ENCODE measurements at regions of chr20 and their contacts with region 1.

Region 1: GRCh38 chr20:45857114-45857881 is at the starts of genes ACOT8 and ZSWIM3:
- DNase-seq: peak; percentile 99
- H3K4me3 Mint-ChIP-seq: peak within 1 kb of the TSS; percentile 98
- H3K27ac Mint-ChIP-seq: peak within 1 kb of the TSS; percentile 98
- H3K4me1 Mint-ChIP-seq: peaks cover 35% of the 10 kb centered on the region
- H3K27me3 Mint-ChIP-seq: no peaks in the 10 kb centered on the region
- total RNA-seq, gene ACOT8: 27.6 and 28.5 TPM in 2 replicates
- total RNA-seq, gene ZSWIM3: 5.5 and 6.0 TPM in 2 replicates

Region 2: DNA sequence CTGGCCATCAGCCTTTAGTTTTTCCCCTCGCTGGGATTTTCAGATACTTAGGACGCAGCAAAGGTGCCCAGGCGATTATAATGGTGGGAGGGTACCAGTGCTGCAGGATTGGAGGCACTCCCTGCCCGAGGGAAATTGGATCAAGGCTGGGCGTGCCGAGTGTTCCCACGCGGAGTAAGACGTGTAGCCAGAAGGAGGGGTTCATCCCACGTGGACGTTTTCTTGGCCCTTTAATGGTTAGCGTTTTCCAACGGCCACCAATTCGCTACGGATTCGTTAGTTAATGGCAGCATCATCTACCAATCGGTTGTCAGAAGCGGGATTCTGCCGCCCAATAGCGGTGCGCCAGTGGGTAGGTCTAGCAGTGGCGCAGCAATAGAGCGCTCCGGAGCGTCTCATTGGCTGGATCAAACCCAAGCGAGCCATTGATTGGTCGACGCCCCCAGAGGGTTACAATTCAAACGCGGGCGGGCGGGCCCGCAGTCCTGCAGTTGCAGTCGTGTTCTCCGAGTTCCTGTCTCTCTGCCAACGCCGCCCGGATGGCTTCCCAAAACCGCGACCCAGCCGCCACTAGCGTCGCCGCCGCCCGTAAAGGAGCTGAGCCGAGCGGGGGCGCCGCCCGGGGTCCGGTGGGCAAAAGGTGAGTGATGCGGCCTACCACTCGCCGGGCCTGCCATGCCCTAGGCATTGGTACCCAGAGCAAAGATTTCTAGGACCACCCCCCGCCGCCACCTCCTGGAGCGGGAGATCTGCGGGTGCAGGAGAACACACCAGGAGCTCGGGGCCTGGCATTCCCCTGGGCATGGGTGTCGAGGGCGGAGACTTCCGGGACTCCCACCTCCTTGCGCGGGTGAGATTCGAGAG is 44.9 kb before region 1 on chr20 and contains the start of gene UBE2C:
- intact Hi-C with region 1: loop called (anchors 1 kb)
- DNase-seq: peak; percentile 98
- H3K4me3 Mint-ChIP-seq: peak within 1 kb of the TSS; percentile 89
- H3K27ac Mint-ChIP-seq: peak within 1 kb of the TSS; percentile 90
- H3K4me1 Mint-ChIP-seq: peaks cover 27% of the 10 kb centered on the region
- H3K27me3 Mint-ChIP-seq: no peaks in the 10 kb centered on the region
- total RNA-seq, gene UBE2C: 113 and 115 TPM in 2 replicates

Region 3: DNA sequence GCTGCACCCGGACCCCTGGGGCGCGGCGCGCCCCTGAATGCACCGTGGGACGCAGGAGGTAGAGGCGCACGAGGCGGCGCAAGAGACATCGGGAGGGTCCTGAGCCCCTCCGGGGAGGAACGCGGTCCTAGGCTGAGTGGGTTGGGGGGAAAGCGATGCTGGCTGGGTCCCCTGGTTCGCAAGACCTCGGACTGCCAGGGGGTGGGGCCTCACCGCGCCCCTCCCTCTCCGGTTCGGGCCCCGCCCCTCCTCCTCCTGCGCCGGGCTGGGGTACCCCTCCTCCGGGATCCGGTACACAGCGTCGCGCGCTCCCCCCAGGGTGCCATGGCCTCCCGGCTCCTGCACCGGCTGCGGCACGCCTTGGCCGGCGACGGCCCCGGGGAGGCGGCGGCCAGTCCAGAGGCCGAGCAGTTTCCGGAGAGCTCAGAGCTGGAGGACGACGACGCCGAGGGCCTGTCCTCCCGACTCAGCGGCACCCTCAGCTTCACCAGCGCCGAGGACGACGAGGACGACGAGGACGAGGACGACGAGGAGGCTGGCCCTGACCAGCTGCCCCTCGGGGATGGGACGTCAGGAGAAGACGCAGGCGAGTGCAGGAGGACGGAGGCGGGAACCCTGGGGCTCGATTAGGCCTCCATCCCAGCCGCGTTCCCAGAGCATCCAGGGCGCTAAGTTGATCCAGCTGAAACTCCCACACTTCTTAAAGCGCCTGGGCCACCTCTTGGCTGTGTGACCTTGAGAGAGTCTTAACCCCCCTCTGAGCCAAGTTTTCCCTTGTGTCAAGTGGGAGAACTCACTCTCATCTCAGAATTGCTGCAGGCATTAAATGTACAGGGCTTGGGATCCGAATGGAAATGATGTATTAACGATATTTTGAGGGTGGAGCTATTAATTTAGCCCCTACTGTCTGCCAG is 23.2 kb before region 1 on chr20:
- intact Hi-C with region 1: loop called (anchors 2 kb)
- DNase-seq: peak; percentile 87
- H3K4me3 Mint-ChIP-seq: peak overlapping the region; percentile 83
- H3K27ac Mint-ChIP-seq: no peak overlapping the region
- H3K4me1 Mint-ChIP-seq: peaks cover 6% of the 10 kb centered on the region
- H3K27me3 Mint-ChIP-seq: peaks cover 10% of the 10 kb centered on the region

Region 4: DNA sequence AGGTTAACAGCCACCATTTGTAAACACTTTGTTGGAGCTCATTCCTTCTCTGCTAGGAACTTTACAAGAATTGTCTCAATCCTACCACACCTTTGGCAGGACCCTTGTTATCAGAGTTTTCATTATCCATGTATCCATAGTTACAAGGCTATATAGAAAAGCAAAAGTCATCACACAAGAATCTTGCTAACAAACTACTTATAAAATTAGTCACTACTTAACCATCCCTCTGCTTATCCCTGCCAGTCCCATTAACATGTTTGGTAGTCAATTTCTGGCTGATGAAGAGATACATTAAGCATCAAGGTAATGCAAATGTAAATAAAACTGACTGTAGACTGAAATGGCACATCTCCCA is 10.5 kb after region 1 on chr20:
- intact Hi-C with region 1: no loop called
- DNase-seq: no peak
- H3K4me3 Mint-ChIP-seq: no peak overlapping the region
- H3K27ac Mint-ChIP-seq: no peak overlapping the region
- H3K4me1 Mint-ChIP-seq: no peaks in the 10 kb centered on the region
- H3K27me3 Mint-ChIP-seq: no peaks in the 10 kb centered on the region

Region 5: GRCh38 chr20:45880988-45881788 is 23.9 kb after region 1 on chr20 and contains the start of gene ZSWIM1:
- intact Hi-C with region 1: loop called (anchors 1 kb)
- DNase-seq: peak; percentile 100
- H3K4me3 Mint-ChIP-seq: peak within 1 kb of the TSS; percentile 92
- H3K27ac Mint-ChIP-seq: peak within 1 kb of the TSS; percentile 82
- H3K4me1 Mint-ChIP-seq: peaks cover 33% of the 10 kb centered on the region
- H3K27me3 Mint-ChIP-seq: no peaks in the 10 kb centered on the region
- total RNA-seq, gene ZSWIM1: 9.4 and 10.4 TPM in 2 replicates

Region 6: GRCh38 chr20:45890985-45891983 is 34.0 kb after region 1 on chr20 and contains the starts of genes CTSA and NEURL2:
- intact Hi-C with region 1: loop called (anchors 1 kb)
- DNase-seq: peak; percentile 96
- H3K4me3 Mint-ChIP-seq: peak within 1 kb of the TSS; percentile 95
- H3K27ac Mint-ChIP-seq: peak within 1 kb of the TSS; percentile 92
- H3K4me1 Mint-ChIP-seq: peaks cover 17% of the 10 kb centered on the region
- H3K27me3 Mint-ChIP-seq: no peaks in the 10 kb centered on the region
- total RNA-seq, gene CTSA: 48.7 and 50.8 TPM in 2 replicates
- total RNA-seq, gene NEURL2: 2.0 and 2.4 TPM in 2 replicates

Region 7: DNA sequence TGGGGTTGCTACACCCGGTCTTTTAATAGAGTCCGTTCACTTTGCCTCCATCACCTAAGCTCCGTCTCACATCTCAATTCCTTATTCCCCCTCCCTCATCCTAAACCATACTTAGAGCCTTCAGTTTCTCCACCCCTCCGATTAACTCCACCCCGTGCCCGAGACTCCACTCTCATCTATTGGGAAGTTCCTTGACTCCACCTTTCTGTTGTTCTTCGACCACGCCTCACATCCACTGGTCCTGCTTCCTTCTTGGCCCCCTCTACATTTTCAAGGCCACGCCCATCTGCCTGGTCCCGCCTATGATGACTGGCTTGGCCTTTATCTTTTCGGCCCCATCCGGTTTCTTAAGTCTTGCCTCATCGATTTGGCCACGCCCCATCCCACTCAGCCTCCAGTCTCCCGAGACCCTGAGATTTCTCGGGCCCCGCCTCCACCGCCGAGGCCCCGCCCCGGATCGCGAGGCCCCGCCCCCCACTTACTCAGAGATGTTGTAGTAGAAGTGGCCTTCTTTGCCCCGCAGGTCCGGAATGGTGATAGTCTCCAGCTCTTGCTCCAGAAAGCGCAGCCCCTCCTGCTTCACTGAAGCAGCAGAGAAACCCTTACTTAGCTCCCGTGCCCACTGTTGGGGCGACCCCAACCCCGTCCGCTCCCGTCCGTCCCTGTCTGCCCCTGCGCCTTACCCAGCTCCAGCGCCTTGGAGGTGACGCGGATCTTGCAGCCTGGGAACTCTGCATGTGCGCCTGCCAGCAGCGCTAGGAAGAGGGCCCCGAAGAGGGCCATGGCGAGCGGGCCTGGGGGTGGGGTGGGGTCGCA is 53.6 kb after region 1 on chr20:
- intact Hi-C with region 1: loop called (anchors 1 kb)
- DNase-seq: peak; percentile 96
- H3K4me3 Mint-ChIP-seq: peak overlapping the region; percentile 84
- H3K27ac Mint-ChIP-seq: peak overlapping the region; percentile 86
- H3K4me1 Mint-ChIP-seq: peaks cover 11% of the 10 kb centered on the region
- H3K27me3 Mint-ChIP-seq: peaks cover 5% of the 10 kb centered on the region

Region 8: DNA sequence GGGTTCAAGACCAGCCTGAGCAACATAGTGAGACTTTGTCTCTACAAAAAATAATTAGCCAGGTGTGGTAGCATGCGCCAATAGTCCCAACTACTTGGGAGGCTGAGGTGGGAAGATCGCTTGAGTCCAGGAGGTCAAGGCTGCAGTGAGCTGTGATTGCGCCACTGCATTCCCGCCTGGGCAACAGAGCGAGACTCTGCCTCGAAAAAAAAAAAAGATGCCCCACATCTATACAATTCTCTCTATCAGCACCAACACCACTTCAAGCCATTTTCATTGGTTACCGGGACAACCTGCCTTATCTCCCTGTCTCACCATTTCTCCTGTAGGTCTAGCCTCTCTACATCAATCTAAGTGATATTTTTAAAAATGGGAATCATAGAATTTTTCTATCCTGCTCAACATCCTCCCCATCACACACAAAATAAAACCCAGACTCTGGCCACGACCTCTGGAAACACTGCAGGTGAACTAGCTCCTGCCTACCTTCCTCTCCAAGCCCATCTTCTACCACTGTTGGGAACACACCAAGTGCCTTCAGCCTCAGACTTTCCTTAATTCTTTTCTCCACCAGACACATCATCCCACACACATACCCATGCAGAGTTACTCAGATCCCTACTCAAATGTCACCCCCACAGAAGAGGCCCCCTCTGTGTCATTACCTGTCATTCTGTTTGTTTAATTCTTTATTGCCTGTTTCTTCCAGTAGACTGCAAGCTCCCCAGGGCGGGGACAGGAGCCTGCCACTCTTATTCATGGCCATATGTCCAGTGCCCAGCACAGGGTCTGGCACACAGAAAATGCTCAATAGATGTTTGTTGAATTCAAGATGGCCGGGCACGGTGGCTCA is 64.3 kb after region 1 on chr20:
- intact Hi-C with region 1: no loop called
- DNase-seq: no peak
- H3K4me3 Mint-ChIP-seq: no peak overlapping the region
- H3K27ac Mint-ChIP-seq: no peak overlapping the region
- H3K4me1 Mint-ChIP-seq: peaks cover 5% of the 10 kb centered on the region
- H3K27me3 Mint-ChIP-seq: peaks cover 19% of the 10 kb centered on the region

Region 9: DNA sequence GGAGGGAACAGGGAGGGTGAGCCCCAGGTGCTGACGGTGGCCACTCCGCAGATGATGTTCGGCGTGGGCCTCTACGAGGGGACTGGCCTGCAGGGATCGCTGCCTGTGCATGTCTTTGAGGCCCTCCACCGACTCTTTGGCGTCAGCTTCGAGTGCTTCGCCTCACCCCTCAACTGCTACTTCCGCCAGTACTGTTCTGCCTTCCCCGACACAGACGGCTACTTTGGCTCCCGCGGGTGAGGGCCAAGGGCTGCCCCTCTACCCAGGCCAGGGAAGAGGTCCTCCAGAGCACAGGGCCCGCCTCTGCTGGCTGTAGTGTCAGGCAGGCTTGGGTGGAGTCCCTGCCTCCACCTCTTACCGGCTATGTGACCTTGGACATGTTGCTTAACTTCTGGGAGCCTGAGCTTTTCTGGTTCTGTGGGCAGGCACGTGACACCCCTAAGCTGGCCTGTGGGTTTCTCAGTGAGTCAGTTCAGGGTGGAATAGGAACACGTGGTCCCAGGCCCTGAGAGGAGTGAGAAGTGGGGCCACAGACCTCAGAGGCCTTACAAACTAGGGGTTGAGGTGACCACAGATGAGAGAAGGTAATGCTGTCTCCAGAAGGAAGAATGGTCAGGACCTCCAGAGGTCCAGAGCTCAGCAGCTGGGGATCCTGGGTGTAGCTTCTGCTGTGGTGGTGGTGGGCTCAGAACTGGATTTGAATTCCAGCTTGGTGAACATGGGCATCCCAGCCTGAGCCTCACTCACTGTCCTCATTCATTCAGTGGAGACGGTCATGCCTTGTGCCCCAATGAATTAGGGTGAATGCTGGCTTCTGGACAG is 89.1 kb after region 1 on chr20:
- intact Hi-C with region 1: no loop called
- DNase-seq: no peak
- H3K4me3 Mint-ChIP-seq: no peak overlapping the region
- H3K27ac Mint-ChIP-seq: peak overlapping the region; percentile 74
- H3K4me1 Mint-ChIP-seq: peaks cover 7% of the 10 kb centered on the region
- H3K27me3 Mint-ChIP-seq: no peaks in the 10 kb centered on the region

Region 10: DNA sequence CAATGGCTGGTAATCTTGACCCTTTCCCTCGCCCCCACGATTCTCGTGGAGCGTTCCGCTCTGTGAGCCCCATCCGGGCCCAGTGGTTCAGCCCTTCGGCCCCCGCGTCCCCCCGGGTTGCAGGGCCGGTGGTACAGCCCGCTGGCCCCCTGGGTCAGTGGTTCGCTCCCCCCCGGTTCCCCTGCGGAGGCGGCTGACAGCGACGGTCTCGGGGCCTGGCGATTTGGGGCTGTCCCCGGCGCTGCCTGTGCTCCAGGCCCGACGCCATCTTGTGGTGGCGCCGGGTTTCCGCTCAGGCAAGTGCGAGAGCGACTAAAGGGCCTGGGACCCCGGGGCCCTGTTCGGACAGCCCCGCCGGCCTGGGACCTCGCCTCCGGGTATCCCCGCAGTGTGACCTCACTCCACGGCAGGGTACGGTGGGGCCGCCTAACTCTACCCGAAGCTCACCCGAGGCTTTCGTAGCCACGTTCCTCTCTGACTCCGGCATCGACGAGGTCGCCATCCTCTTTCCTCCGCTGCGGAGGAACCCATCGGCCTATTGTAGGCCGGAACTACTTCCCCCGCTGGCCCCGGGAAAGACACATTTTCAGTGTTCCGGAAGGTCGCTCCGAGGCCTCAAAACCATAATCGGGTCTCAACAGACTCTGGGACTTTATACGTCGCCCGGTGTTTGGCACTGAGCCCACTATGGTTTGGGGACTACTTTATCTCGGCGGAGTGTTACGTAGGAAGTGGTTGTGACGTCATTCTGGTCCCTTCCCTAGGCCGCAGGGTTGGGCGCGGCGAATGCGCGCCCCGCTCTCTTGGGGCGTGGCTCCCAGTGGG is 114.6 kb after region 1 on chr20 and contains the start of gene ZNF335:
- intact Hi-C with region 1: loop called (anchors 1 kb)
- DNase-seq: peak; percentile 99
- H3K4me3 Mint-ChIP-seq: peak within 1 kb of the TSS; percentile 93
- H3K27ac Mint-ChIP-seq: peak within 1 kb of the TSS; percentile 99
- H3K4me1 Mint-ChIP-seq: peaks cover 14% of the 10 kb centered on the region
- H3K27me3 Mint-ChIP-seq: no peaks in the 10 kb centered on the region
- total RNA-seq, gene ZNF335: 37.5 and 39.5 TPM in 2 replicates